ENCODE measurements at regions of chr19 and their contacts with region 1.

Region 1: DNA sequence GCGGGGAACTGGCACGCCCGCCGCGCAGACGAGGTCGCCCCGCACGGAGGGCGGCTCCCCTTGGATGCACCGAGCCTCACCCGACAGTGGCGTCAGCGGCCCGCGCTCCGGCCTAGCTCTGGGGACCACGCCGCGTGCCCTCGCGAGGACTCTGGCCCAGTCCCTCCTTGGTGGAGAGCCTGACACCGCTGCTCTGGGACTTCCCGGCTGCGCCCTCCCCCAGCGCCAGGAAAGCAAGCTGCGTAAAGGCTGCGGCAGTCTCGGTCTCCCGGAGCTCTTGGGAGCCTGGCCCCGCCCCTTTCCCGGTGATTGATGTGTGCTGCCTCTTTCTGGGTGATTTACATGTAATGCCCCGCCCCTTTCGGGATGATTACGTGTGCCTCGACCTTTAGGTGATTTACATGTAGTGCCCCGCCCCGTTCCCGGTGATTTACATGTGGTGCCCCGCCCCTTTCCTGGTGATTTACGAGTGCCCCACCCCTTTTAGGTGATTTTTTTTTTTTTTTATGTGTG is at the start of gene LENG9:
- DNase-seq: peak; percentile 97 to 99
- H3K4me3 ChIP-seq: peak within 1 kb of the TSS; percentile 77
- H3K27ac ChIP-seq: peak within 1 kb of the TSS; percentile 89
- H3K4me1 ChIP-seq: peaks cover 18% of the 10 kb centered on the region
- H3K27me3 ChIP-seq: no peaks in the 10 kb centered on the region
- CTCF ChIP-seq: no peak
- total RNA-seq, gene LENG9: 7.0 and 8.9 TPM in 2 replicates

Region 2: DNA sequence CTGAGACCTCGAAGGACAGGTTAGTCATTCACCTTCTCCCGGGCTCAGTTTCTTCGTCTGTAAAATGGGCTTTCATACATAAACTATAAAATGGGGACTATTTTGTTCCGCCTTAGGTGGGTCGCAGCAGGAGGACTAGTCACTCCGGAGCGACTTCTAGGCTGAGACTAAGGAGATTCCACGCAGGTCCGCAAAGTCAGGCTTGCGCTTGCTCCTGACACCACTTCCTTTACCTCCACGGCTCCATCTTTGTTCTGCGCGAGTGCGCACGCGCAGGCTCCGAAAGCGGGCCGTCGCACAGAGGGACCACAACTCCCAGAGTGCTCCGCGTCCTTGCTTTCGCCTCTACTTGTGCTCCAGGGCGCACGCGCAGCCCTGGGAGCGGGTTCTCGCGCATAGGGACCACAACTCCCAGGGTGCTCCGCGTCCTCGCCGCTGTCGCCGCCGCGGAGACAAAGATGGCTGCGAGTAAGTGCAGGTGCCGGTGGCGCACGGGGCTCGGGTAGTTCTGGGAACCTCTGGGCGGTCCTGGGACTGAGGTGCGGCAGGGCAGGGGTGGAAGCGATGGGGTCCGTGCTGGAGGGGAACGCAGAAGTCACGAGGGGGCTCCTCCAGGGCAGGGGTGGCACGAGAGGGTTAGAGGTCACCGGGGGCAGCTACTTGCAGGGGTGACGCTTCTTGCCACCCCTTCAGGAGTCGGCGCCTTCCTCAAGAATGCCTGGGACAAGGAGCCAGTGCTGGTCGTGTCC is 361.0 kb before region 1 on chr19 and contains the start of gene NDUFA3:
- CTCF ChIA-PET with region 1: no interaction called
- POLR2A ChIA-PET with region 1: interaction called, 10 read pairs
- intact Hi-C with region 1: no loop called
- DNase-seq: peak; percentile 96 to 99
- H3K4me3 ChIP-seq: peak within 1 kb of the TSS; percentile 68
- H3K27ac ChIP-seq: no peak within 1 kb of the TSS
- H3K4me1 ChIP-seq: 0 out of 2 replicates have a peak, but pooled peaks cover 7% of the 10 kb centered on the region
- H3K27me3 ChIP-seq: no peaks in the 10 kb centered on the region
- CTCF ChIP-seq: no peak
- total RNA-seq, gene NDUFA3: 119 and 134 TPM in 2 replicates

Region 3: DNA sequence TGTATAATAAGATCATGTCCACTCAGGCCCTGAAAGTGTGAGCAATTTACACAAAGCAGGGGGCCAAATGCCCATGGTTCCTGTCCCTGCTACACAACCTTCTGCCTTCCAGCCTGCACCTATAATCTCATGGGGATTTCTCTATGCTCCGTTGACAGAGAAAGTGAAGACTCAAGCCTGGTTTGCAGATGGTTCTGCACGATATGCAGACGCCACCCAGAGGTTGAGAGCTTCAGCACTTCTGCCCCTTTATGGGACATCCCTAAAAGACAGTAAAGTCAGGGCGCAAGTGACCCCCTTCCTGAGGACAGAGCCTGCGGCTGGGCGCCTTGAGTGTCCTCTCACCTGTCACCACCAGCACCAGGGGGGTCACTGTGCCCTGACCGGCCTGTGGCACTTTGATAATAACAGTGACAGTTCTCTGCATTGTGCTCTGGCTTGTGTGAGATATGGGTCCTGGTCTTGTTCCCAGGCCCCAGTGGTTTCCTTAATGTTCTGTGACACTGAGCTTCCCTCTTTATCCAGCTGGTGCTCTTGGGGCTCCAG is 165.8 kb before region 1 on chr19:
- CTCF ChIA-PET with region 1: no interaction called
- POLR2A ChIA-PET with region 1: no interaction called
- intact Hi-C with region 1: no loop called
- DNase-seq: no peak
- H3K4me3 ChIP-seq: no peak overlapping the region
- H3K27ac ChIP-seq: no peak overlapping the region
- H3K4me1 ChIP-seq: no peaks in the 10 kb centered on the region
- H3K27me3 ChIP-seq: peaks cover 93% of the 10 kb centered on the region
- CTCF ChIP-seq: no peak; the same call in 1 of the 2 replicates

Region 4: GRCh38 chr19:54430306-54431254 is 33.0 kb before region 1 on chr19:
- CTCF ChIA-PET with region 1: interaction called, 10 read pairs
- POLR2A ChIA-PET with region 1: interaction called, 3 read pairs
- intact Hi-C with region 1: loop called (anchors 1 kb)
- DNase-seq: peak; percentile 81 to 85
- H3K4me3 ChIP-seq: peak overlapping the region; percentile 59
- H3K27ac ChIP-seq: peak overlapping the region; percentile 99
- H3K4me1 ChIP-seq: peaks cover 58% of the 10 kb centered on the region
- H3K27me3 ChIP-seq: no peaks in the 10 kb centered on the region
- CTCF ChIP-seq: peak; percentile 64

Region 5: GRCh38 chr19:55062734-55063492 is 599.3 kb after region 1 on chr19 and contains the start of gene RDH13:
- CTCF ChIA-PET with region 1: no interaction called
- POLR2A ChIA-PET with region 1: no interaction called
- intact Hi-C with region 1: loop called (anchors 10 kb)
- DNase-seq: peak; percentile 95 to 98
- H3K4me3 ChIP-seq: peak within 1 kb of the TSS; percentile 100
- H3K27ac ChIP-seq: peak within 1 kb of the TSS; percentile 71
- H3K4me1 ChIP-seq: peaks cover 16% of the 10 kb centered on the region
- H3K27me3 ChIP-seq: no peaks in the 10 kb centered on the region
- CTCF ChIP-seq: no peak; the same call in 1 of the 2 replicates
- total RNA-seq, gene RDH13: 39.8 and 42.1 TPM in 2 replicates

Region 6: DNA sequence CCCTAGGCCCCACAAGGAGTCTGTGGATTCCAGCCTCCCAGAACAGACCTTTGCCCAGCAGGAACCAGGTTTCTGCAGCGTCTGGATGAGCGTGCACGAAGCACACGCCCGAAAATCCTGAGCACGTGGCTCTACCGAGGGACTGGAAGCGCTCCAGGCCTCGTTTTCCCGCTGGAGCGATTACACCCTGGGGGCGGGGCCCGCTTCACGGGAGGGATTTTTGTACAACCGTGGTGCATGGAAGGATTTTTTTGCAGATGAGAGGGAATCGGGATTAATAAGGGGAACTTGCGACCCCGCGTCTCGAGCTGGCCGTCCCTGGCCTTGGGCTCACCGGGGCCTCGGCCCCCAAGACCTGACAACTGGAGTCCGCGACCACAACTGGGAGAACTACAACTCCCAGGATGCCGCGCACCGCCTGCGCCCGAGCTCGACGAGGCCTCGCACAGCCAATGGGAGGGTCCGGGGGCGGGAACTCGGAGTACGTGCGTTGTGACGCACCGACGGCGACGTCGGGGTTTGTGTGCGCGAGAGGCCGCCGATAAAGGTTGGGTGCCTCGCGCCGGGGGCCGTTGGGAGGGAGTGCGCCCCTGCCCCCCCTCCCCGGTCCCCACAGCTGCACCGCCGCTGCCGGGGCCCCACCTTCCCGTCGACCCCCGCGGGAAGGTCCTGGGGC is 1012.7 kb after region 1 on chr19 and contains the start of gene ZNF628:
- CTCF ChIA-PET with region 1: no interaction called
- POLR2A ChIA-PET with region 1: no interaction called
- intact Hi-C with region 1: loop called (anchors 10 kb)
- DNase-seq: peak; percentile 95 to 99
- H3K4me3 ChIP-seq: peak within 1 kb of the TSS; percentile 68
- H3K27ac ChIP-seq: peak within 1 kb of the TSS; percentile 72
- H3K4me1 ChIP-seq: peaks cover 38% of the 10 kb centered on the region
- H3K27me3 ChIP-seq: no peaks in the 10 kb centered on the region
- CTCF ChIP-seq: no peak
- total RNA-seq, gene ZNF628: 17.7 and 19.3 TPM in 2 replicates

Measured in PC-9 (cell line).